Activated B cell treated with CpG ODN at 0.5 μM for 24 hours (primary cell): ENCODE measurements at regions of chr2 and their contacts with region 1.

Region 1: DNA sequence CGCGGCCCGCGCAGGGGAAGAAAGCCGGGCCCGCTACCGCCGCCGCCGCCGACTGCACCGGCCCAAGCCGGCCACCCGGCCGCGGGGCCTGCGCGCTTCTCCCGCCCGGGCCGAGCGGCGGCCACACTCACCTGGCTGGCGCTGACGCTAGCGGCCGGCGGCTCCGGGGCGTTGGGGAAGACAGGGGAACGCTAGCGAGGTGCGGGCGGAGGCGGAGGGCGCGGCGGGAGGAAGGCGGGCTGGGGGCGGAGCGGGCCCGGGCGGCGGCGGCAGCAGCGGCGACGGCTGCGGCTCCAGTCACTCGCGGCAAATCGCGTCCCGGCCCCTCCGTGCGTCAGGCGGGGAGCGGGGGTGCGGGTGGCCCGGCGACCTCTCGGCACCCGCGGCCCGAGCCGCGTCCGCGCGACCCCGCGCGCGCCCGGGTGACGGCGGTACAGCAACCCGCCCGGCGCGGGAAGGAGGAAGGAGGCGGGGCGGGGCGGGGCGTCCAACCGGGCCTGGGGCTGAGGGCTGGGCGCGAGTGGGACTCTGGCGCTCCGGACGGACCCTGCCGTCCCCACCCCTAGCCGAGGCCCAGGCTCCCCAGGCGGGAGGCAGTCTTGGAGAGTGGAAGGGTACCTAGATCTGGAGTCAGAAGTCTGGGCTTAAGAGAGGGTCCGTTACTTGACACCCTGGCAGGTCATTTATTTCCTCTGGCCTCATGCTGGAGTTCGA is at the start of gene SESTD1:
- DNase-seq: peak; percentile 75
- ATAC-seq: peak; percentile 80
- H3K4me3 Mint-ChIP-seq: peak within 1 kb of the TSS; percentile 91
- H3K27ac Mint-ChIP-seq: peak within 1 kb of the TSS; percentile 86
- H3K4me1 Mint-ChIP-seq: peaks cover 53% of the 10 kb centered on the region
- H3K27me3 Mint-ChIP-seq: no peaks in the 10 kb centered on the region
- CTCF ChIP-seq: no peak
- total RNA-seq, gene SESTD1: 49.2 and 49.6 TPM in 2 replicates

Region 2: GRCh38 chr2:179165356-179166000 is 99.0 kb before region 1 on chr2:
- CTCF ChIA-PET with region 1: no interaction called
- POLR2A ChIA-PET with region 1: no interaction called
- intact Hi-C with region 1: no loop called
- DNase-seq: no peak
- ATAC-seq: no peak
- H3K4me3 Mint-ChIP-seq: no peak overlapping the region
- H3K27ac Mint-ChIP-seq: no peak overlapping the region
- H3K4me1 Mint-ChIP-seq: peaks cover 14% of the 10 kb centered on the region
- H3K27me3 Mint-ChIP-seq: no peaks in the 10 kb centered on the region
- CTCF ChIP-seq: no peak

Region 3: DNA sequence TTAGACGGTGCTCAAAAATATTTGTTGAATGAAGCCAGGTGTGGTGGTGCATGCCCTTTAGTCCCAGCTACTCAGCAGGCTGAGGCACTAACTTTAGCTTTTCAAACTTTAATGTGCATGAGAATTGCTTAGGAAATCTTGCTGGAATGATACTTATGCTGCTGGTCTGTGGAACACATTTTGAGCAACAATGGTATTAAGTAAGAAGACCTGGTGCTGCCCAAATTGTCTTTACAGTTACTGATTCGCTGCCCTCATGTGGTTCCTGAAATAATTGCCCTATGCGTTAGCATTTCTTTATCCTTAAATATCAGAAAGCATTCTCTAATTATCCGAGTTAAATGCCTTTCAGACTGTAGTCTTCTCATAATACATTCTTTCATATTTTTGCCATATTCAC is 76.1 kb after region 1 on chr2:
- CTCF ChIA-PET with region 1: no interaction called
- POLR2A ChIA-PET with region 1: no interaction called
- intact Hi-C with region 1: loop called (anchors 5 kb)
- DNase-seq: no peak
- ATAC-seq: no peak
- H3K4me3 Mint-ChIP-seq: no peak overlapping the region
- H3K27ac Mint-ChIP-seq: no peak overlapping the region
- H3K4me1 Mint-ChIP-seq: peaks cover 8% of the 10 kb centered on the region
- H3K27me3 Mint-ChIP-seq: no peaks in the 10 kb centered on the region
- CTCF ChIP-seq: no peak